MCF 10A (cell line): ENCODE measurements at regions of chr3 and their contacts with region 1.

Region 1: GRCh38 chr3:165185707-165186327 is 10.4 kb downstream of the SLITRK3 start:
- DNase-seq: peak; percentile 78
- H3K4me3 Mint-ChIP-seq: no peak overlapping the region
- H3K27ac Mint-ChIP-seq: no peak overlapping the region
- H3K4me1 Mint-ChIP-seq: no peaks in the 10 kb centered on the region
- H3K27me3 Mint-ChIP-seq: peaks cover 27% of the 10 kb centered on the region
- CTCF ChIP-seq: peak; percentile 81

Region 2: GRCh38 chr3:163490119-163490518 is 1695.7 kb before region 1 on chr3:
- CTCF ChIA-PET with region 1: interaction called, 3 read pairs
- POLR2A ChIA-PET with region 1: no interaction called
- intact Hi-C with region 1: loop called (anchors 5 kb)
- DNase-seq: peak; percentile 76
- H3K4me3 Mint-ChIP-seq: no peak overlapping the region
- H3K27ac Mint-ChIP-seq: no peak overlapping the region
- H3K4me1 Mint-ChIP-seq: no peaks in the 10 kb centered on the region
- H3K27me3 Mint-ChIP-seq: no peaks in the 10 kb centered on the region
- CTCF ChIP-seq: peak; percentile 72

Region 3: GRCh38 chr3:163957087-163957486 is 1228.7 kb before region 1 on chr3:
- CTCF ChIA-PET with region 1: interaction called, 3 read pairs
- POLR2A ChIA-PET with region 1: no interaction called
- intact Hi-C with region 1: loop called (anchors 1 kb)
- DNase-seq: no peak
- H3K4me3 Mint-ChIP-seq: no peak overlapping the region
- H3K27ac Mint-ChIP-seq: no peak overlapping the region
- H3K4me1 Mint-ChIP-seq: no peaks in the 10 kb centered on the region
- H3K27me3 Mint-ChIP-seq: no peaks in the 10 kb centered on the region
- CTCF ChIP-seq: no peak

Region 4: DNA sequence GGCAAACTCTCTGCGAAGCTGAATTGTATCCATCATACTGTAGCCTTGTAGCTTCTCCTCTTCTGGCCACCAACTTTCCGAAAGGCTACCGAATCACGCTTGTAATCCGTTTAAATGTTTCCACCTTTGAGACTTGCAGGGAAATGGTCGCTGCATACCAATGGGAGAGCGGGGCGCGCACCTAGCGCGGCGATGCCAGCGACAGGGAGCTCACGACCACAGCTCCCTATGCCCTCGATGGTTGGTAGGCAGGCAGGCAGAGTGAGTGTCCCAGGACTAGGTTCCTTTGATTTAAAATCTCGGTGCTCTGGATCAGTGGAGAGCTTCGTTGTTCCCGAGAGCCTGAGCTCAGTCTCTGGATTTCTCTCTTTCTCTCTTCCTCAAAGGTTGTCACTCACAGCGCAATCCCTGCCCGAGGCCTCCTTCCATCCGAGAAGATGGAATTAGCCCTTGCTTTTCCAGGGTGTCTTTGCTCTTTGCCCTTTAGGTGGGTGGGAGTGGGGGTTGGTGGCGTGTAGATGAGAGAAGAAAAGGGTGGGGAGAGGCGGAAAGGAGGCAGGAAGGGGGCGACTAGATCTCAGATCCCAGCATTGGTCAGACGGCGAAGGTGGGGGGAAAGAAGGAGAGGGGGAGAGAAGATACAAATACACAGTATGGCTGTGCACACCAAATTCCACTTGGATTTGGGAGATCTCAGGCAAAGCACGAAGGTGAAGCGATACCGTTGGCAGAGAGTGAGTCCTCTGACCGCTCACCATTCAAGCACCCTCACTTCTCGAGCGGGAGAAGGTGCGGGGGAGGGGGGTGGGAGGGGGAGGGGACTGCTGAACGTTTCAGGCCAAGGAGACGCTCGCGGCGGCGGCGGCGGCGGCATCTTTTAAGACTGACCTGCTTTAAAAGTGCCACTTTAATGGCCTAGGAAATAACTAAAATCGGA is 10.1 kb after region 1 on chr3 and contains the start of gene SLITRK3:
- CTCF ChIA-PET with region 1: interaction called, 12 read pairs
- POLR2A ChIA-PET with region 1: no interaction called
- intact Hi-C with region 1: no loop called
- DNase-seq: no peak
- H3K4me3 Mint-ChIP-seq: no peak within 1 kb of the TSS
- H3K27ac Mint-ChIP-seq: no peak within 1 kb of the TSS
- H3K4me1 Mint-ChIP-seq: peaks cover 17% of the 10 kb centered on the region
- H3K27me3 Mint-ChIP-seq: peaks cover 63% of the 10 kb centered on the region
- CTCF ChIP-seq: no peak
- total RNA-seq, gene SLITRK3: not detected in 2 replicates